CD4-positive, alpha-beta T cell (primary cell): ENCODE measurements at regions of chr19 and their contacts with region 1.

Region 1: GRCh38 chr19:44954824-44955586 is at the start of gene CLPTM1:
- DNase-seq: peak; percentile 93 to 98 (median 96)
- ATAC-seq: peak; percentile 94
- H3K4me3 ChIP-seq: peak within 1 kb of the TSS; percentile 91
- H3K4me3 Mint-ChIP-seq: peak within 1 kb of the TSS; percentile 96
- H3K27ac ChIP-seq: peak within 1 kb of the TSS; percentile 80 to 93
- H3K27ac Mint-ChIP-seq: peak within 1 kb of the TSS; percentile 88
- H3K4me1 ChIP-seq: peaks cover 52% of the 10 kb centered on the region
- H3K4me1 Mint-ChIP-seq: peaks cover 46% of the 10 kb centered on the region
- H3K27me3 ChIP-seq: no peaks in the 10 kb centered on the region
- H3K27me3 Mint-ChIP-seq: no peaks in the 10 kb centered on the region
- CTCF ChIP-seq: no peak
- total RNA-seq, gene CLPTM1: 71.0 to 72.7 TPM

Region 2: DNA sequence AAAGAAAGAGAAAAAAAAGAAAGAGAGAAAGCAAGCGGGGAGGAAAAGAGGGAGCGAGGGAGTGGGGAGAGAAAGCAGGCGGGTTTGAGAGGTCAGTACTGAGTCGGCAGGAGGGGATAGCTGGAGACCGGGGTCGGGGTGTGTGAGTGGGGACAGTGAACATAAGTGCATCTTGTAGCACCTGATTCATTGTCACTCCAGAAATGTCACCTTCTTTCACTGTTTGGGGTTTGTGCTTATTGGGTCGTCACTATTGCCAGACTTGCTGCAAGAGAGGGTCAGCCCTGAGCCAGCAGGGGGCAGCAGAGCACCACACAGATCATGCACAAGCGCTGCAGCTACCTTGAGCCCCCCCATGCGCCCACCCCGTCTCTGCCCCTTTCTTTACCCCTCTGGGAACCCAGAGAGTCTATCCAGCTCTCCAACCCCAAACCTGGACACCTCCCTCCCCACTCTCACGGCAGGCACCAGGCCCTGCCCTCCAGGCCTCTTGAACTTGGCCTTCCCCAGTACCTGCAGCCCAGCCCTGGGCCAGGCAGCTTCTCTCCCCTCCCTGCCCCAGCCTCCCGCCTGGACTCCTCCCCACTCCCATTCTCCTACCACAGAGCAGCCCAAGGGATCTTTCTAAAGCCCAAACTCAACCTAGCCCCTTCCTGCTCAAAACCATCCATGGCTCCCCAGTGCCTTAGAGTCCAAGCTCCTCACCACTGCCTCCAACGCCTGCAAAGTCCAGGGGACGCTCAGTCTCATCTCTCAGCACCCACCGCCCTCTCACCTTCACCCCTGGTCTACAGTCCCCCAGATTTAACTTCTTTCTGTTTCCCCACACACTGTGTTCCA is 265.7 kb before region 1 on chr19:
- CTCF ChIA-PET with region 1: no interaction called
- POLR2A ChIA-PET with region 1: no interaction called
- intact Hi-C with region 1: loop called in 1 of 2 experiments (anchors 2 kb)
- DNase-seq: peak; percentile 67 to 90 (median 76)
- ATAC-seq: peak; percentile 54
- H3K4me3 ChIP-seq: no peak overlapping the region
- H3K4me3 Mint-ChIP-seq: no peak overlapping the region
- H3K27ac ChIP-seq: no peak overlapping the region
- H3K27ac Mint-ChIP-seq: no peak overlapping the region
- H3K4me1 ChIP-seq: peaks cover 32% of the 10 kb centered on the region
- H3K4me1 Mint-ChIP-seq: peaks cover 35% of the 10 kb centered on the region
- H3K27me3 ChIP-seq: no peaks in the 10 kb centered on the region
- H3K27me3 Mint-ChIP-seq: peaks cover 23% of the 10 kb centered on the region
- CTCF ChIP-seq: peak; percentile 87

Region 3: GRCh38 chr19:44800461-44800860 is 154.5 kb before region 1 on chr19:
- CTCF ChIA-PET with region 1: no interaction called
- POLR2A ChIA-PET with region 1: no interaction called
- intact Hi-C with region 1: no loop called
- DNase-seq: peak; percentile 70 to 88 (median 81)
- ATAC-seq: peak; percentile 98
- H3K4me3 ChIP-seq: no peak overlapping the region
- H3K4me3 Mint-ChIP-seq: no peak overlapping the region
- H3K27ac ChIP-seq: no peak overlapping the region
- H3K27ac Mint-ChIP-seq: no peak overlapping the region
- H3K4me1 ChIP-seq: peaks cover 20% of the 10 kb centered on the region
- H3K4me1 Mint-ChIP-seq: peaks cover 9% of the 10 kb centered on the region
- H3K27me3 ChIP-seq: no peaks in the 10 kb centered on the region
- H3K27me3 Mint-ChIP-seq: no peaks in the 10 kb centered on the region
- CTCF ChIP-seq: peak; percentile 71

Region 4: DNA sequence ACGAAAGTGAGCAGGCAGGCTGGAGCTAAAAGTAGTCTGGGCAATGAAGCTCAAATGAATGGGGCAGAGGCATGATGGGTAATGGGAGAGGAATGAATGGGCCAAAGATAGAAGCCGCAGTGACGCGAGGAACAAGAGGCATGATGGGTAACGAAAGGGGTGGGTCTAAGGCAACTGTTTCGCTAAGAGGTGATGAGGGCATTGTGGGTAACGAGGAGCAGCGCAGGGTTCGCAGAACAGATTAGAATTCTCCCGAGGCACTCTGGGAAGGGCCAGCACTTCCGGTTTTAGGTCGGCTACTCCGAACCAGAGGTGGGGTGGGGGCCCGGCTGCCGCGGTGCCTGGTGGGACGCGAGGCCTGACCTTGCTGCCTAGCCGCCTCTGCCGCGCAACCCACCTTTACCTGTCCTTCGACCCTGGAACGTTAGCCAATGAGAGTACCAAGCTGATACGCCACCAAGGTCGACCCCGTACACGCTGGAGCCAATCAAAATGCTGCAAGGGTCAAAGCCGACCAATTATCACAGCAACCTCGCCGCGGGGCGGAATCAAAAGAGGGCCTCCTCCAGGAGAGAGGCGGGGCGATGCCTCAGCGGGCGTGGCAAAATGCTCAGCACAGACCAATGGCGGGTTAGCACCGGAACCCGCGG is 64.5 kb before region 1 on chr19:
- CTCF ChIA-PET with region 1: interaction called, 3 read pairs
- POLR2A ChIA-PET with region 1: interaction called, 24 read pairs
- intact Hi-C with region 1: loop called (anchors 1 to 2 kb)
- DNase-seq: peak in 9 of 14 experiments; percentile 100
- ATAC-seq: peak; percentile 78
- H3K4me3 ChIP-seq: peak overlapping the region; percentile 63
- H3K4me3 Mint-ChIP-seq: peak overlapping the region; percentile 82
- H3K27ac ChIP-seq: peak overlapping the region; percentile 94 to 95
- H3K27ac Mint-ChIP-seq: peak overlapping the region; percentile 83
- H3K4me1 ChIP-seq: peaks cover 24% of the 10 kb centered on the region
- H3K4me1 Mint-ChIP-seq: peaks cover 25% of the 10 kb centered on the region
- H3K27me3 ChIP-seq: no peaks in the 10 kb centered on the region
- H3K27me3 Mint-ChIP-seq: no peaks in the 10 kb centered on the region
- CTCF ChIP-seq: no peak

Region 5: GRCh38 chr19:44903602-44904425 is 51.2 kb before region 1 on chr19:
- CTCF ChIA-PET with region 1: interaction called, 3 read pairs
- POLR2A ChIA-PET with region 1: no interaction called
- intact Hi-C with region 1: loop called (anchors 1 kb)
- DNase-seq: peak; percentile 39 to 82 (median 69)
- ATAC-seq: peak; percentile 75
- H3K4me3 ChIP-seq: no peak overlapping the region
- H3K4me3 Mint-ChIP-seq: no peak overlapping the region
- H3K27ac ChIP-seq: no peak overlapping the region
- H3K27ac Mint-ChIP-seq: no peak overlapping the region
- H3K4me1 ChIP-seq: peaks cover 17% of the 10 kb centered on the region
- H3K4me1 Mint-ChIP-seq: peaks cover 7% of the 10 kb centered on the region
- H3K27me3 ChIP-seq: peaks cover 18 to 31% of the 10 kb centered on the region in 2 experiments
- H3K27me3 Mint-ChIP-seq: peaks cover 30% of the 10 kb centered on the region
- CTCF ChIP-seq: peak; percentile 97

Region 6: DNA sequence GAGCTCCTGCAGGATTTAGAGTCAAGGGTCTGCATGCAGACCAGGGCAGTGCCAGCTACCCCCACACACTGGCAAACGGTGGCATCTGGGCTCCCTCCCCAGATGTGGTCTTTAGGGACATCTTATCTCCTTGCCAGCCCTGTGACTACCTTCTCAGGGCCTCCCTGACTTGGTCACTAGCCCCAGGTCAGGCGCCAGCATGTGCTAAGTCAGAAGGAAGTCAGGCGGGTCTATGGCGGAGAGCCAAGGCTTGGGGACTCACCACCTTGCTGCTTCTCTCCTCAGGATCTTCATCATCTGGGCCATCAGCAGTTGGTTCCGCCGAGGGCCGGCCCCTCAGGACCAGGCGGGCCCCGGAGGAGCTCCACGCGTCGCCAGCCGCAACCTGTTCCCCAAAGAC is 17.8 kb after region 1 on chr19:
- CTCF ChIA-PET with region 1: no interaction called
- POLR2A ChIA-PET with region 1: no interaction called
- intact Hi-C with region 1: no loop called
- DNase-seq: no peak
- ATAC-seq: no peak
- H3K4me3 ChIP-seq: no peak overlapping the region
- H3K4me3 Mint-ChIP-seq: no peak overlapping the region
- H3K27ac ChIP-seq: no peak overlapping the region
- H3K27ac Mint-ChIP-seq: no peak overlapping the region
- H3K4me1 ChIP-seq: no peaks in the 10 kb centered on the region
- H3K4me1 Mint-ChIP-seq: no peaks in the 10 kb centered on the region
- H3K27me3 ChIP-seq: no peaks in the 10 kb centered on the region
- H3K27me3 Mint-ChIP-seq: no peaks in the 10 kb centered on the region
- CTCF ChIP-seq: no peak

Region 7: DNA sequence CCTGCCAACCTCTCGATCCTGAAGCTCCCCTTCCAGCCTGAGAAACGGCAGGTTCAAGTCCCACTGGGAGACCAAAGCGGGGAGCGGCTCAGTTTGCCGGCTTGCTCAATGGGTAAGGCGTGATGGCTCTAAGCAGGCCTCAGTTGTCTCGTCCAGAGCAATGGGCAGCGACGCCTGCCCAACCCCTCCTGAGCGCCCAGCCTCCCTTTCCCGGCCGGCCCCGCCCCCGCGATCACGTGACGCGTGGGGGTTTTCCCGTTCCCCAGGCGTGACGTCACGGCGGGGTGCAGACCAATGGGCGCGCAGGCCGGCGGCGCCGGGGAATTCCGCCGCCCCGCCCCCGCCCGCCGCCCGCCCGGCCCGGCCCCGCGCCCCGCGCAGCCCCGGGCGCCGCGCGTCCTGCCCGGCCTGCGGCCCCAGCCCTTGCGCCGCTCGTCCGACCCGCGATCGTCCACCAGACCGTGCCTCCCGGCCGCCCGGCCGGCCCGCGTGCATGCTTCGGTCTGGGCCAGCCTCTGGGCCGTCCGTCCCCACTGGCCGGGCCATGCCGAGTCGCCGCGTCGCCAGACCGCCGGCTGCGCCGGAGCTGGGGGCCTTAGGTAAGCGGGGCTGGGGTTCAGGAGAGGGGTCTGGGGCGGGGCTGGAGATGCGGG is 46.2 kb after region 1 on chr19 and contains the start of gene RELB:
- CTCF ChIA-PET with region 1: no interaction called
- POLR2A ChIA-PET with region 1: interaction called, 8 read pairs
- intact Hi-C with region 1: loop called in 1 of 2 experiments (anchors 2 kb)
- DNase-seq: peak; percentile 90 to 98 (median 94)
- ATAC-seq: peak; percentile 55
- H3K4me3 ChIP-seq: peak within 1 kb of the TSS; percentile 58
- H3K4me3 Mint-ChIP-seq: peak within 1 kb of the TSS; percentile 100
- H3K27ac ChIP-seq: peak within 1 kb of the TSS; percentile 98 to 100
- H3K27ac Mint-ChIP-seq: peak within 1 kb of the TSS; percentile 100
- H3K4me1 ChIP-seq: peaks cover 18% of the 10 kb centered on the region
- H3K4me1 Mint-ChIP-seq: peaks cover 10% of the 10 kb centered on the region
- H3K27me3 ChIP-seq: no peaks in the 10 kb centered on the region
- H3K27me3 Mint-ChIP-seq: no peaks in the 10 kb centered on the region
- CTCF ChIP-seq: no peak
- total RNA-seq, gene RELB: 91.6 to 92.5 TPM

Region 8: GRCh38 chr19:45038931-45039893 is 84.2 kb after region 1 on chr19 and contains the start of gene CLASRP:
- CTCF ChIA-PET with region 1: no interaction called
- POLR2A ChIA-PET with region 1: interaction called, 4 read pairs
- intact Hi-C with region 1: loop called in 1 of 2 experiments (anchors 1 kb)
- DNase-seq: peak; percentile 78 to 95 (median 85)
- ATAC-seq: peak; percentile 87
- H3K4me3 ChIP-seq: peak within 1 kb of the TSS; percentile 98
- H3K4me3 Mint-ChIP-seq: peak within 1 kb of the TSS; percentile 99
- H3K27ac ChIP-seq: peak within 1 kb of the TSS; percentile 91 to 99
- H3K27ac Mint-ChIP-seq: peak within 1 kb of the TSS; percentile 96
- H3K4me1 ChIP-seq: peaks cover 46% of the 10 kb centered on the region
- H3K4me1 Mint-ChIP-seq: peaks cover 34% of the 10 kb centered on the region
- H3K27me3 ChIP-seq: no peaks in the 10 kb centered on the region
- H3K27me3 Mint-ChIP-seq: no peaks in the 10 kb centered on the region
- CTCF ChIP-seq: no peak
- total RNA-seq, gene CLASRP: 152 to 154 TPM

Region 9: DNA sequence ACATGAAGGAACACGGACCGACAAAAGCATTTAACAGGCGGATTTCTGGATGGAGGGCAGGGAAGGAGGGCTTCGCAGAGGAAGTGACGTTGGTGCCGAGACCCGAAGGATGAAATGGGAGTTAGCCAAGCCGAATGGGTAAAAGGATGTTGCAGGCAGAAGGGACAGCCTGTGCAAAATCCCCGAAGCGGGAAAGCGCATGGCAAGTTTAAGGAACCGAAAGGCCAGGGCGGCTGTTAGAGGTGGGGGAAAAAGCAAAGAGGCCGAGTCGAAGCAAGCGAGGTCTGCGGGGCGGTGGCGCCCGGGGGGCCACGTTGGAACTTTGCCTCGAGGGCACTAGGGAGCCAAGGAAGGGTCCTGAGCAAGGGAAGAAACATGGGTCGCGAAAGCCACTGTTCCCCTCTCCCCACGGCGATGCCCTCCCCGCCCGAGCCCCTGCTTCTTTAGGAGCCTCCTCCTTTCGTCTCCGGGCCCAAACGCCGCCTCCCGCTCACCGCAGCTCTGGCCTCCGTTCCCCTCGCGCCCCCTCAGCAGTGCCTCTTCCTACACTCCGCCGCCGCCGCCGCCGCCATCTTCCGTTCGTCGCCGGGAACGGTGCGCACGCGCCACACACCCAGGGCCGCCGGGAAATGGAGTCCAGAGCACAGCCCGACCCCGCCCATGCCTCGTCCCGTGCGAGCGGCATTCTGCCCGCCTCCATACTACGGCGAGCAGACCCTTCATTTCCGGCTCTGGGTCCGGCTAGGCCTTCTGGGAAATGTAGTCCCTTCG is 907.7 kb after region 1 on chr19 and contains the start of gene SYMPK:
- CTCF ChIA-PET with region 1: no interaction called
- POLR2A ChIA-PET with region 1: no interaction called
- intact Hi-C with region 1: loop called in 1 of 2 experiments (anchors 10 kb)
- DNase-seq: peak; percentile 96 to 99 (median 98)
- ATAC-seq: peak; percentile 97
- H3K4me3 ChIP-seq: peak within 1 kb of the TSS; percentile 80
- H3K4me3 Mint-ChIP-seq: peak within 1 kb of the TSS; percentile 99
- H3K27ac ChIP-seq: peak within 1 kb of the TSS; percentile 66 to 86
- H3K27ac Mint-ChIP-seq: peak within 1 kb of the TSS; percentile 83
- H3K4me1 ChIP-seq: peaks cover 29% of the 10 kb centered on the region
- H3K4me1 Mint-ChIP-seq: peaks cover 34% of the 10 kb centered on the region
- H3K27me3 ChIP-seq: peaks cover 9 to 13% of the 10 kb centered on the region in 2 experiments
- H3K27me3 Mint-ChIP-seq: peaks cover 29% of the 10 kb centered on the region
- CTCF ChIP-seq: no peak
- total RNA-seq, gene SYMPK: 63.3 to 65.0 TPM